Calu3 (cell line): ENCODE measurements at regions of chr7 and their contacts with region 1.

Region 1: DNA sequence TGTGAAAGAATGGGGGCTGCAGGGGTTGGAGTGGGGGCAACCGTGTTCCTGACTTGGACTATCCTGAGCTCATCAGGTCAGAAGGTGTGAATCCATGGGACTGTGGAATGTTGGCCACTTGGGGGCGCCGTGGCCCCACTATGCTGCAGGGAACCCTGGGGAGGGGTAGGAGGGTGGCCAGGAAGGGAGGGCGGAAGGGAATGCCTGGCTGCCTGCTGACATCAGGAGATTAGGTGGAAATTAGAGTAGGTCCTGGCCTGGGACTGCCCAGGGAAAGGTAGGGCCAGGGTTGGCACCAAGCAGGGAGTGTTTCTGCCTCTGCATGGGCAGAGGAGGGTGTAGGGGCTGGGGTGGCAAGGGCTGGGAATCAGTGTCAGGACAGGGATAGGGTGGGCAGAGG is 65.8 kb upstream of the PRSS58 start:
- DNase-seq: peak; percentile 67
- H3K4me3 Mint-ChIP-seq: no peak overlapping the region
- H3K27ac Mint-ChIP-seq: no peak overlapping the region
- H3K4me1 Mint-ChIP-seq: peaks cover 8% of the 10 kb centered on the region
- H3K27me3 Mint-ChIP-seq: peaks cover 39% of the 10 kb centered on the region
- CTCF ChIP-seq: peak; percentile 42

Region 2: DNA sequence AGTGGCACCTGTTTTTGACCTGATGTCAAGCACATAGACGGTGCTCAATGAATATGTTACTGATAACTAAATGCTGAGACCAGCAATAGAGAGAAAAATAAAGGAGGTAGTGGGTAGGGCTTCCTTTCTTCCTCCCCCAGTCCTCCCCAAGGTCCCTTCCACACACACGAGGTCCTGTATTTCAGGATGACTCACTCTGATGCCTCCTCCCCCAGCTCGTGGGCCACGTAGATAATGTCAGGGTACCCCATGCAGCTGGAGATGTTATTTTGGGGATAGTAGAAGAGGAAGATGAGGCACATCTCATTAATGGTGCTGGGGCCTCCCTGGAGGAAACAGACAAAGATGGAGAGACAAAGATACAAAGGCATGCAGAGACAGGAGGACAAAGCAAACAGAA is 83.2 kb before region 1 on chr7:
- CTCF ChIA-PET with region 1: no interaction called
- intact Hi-C with region 1: no loop called
- DNase-seq: no peak
- H3K4me3 Mint-ChIP-seq: no peak overlapping the region
- H3K27ac Mint-ChIP-seq: no peak overlapping the region
- H3K4me1 Mint-ChIP-seq: no peaks in the 10 kb centered on the region
- H3K27me3 Mint-ChIP-seq: no peaks in the 10 kb centered on the region
- CTCF ChIP-seq: no peak

Region 3: DNA sequence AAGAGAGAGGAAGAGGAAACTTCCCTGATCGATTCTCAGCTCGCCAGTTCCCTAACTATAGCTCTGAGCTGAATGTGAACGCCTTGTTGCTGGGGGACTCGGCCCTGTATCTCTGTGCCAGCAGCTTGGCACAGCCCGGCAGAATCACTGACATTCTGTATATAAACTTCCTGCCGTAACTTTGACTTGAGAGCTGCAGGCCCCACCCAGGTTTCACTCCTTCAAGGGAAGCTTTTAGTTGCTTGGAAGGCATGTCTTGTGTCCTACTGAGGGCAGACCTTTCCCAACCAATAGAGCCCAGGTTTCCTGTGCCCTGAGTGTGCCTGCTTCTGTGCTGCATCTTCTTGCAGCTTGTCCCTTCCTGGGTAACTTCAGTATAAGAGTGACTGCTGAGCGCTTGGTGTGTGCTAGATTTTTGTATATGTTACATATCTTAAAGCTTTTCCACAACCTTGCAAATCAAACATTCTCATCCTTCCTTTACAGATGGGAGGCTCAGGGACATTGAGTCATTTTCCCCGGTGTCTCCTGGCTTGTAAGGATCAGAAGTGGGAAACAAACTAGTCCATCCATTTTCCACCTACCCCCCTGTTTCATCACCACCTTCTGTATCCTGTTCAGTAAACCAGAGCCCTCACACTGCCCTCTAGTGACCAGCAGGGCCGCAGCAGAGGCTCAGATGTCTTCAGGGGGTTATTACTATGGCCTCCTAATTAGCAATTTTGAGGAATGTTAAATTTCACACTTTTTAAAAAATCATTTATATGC is 159.4 kb after region 1 on chr7:
- CTCF ChIA-PET with region 1: interaction called, 5 read pairs
- intact Hi-C with region 1: loop called (anchors 10 kb)
- DNase-seq: peak; percentile 72
- H3K4me3 Mint-ChIP-seq: no peak overlapping the region
- H3K27ac Mint-ChIP-seq: no peak overlapping the region
- H3K4me1 Mint-ChIP-seq: peaks cover 6% of the 10 kb centered on the region
- H3K27me3 Mint-ChIP-seq: peaks cover 56% of the 10 kb centered on the region
- CTCF ChIP-seq: peak; percentile 55

Region 4: DNA sequence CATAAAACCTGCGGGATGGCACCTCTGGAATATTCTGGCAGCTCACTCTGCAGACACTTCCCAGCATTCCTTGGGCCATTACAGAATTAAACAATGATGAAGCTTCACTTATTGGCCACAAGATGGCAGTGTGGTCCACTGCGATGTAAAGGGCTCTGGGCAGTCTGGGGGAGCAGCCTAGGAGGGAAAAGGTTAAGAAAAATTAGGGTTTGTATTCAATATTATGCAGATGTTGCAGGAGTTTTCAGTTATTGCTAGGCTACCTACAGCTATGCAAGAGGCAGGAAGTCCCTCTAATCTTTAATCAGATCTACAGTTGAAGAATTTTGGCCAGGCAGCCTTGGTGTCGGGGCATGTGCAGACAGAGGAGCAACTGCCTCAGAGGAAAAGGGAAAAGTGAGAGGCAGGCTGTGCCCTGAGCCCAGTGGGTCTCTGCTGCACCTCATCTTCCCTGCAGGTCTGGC is 192.4 kb after region 1 on chr7:
- CTCF ChIA-PET with region 1: interaction called, 11 read pairs
- intact Hi-C with region 1: no loop called
- DNase-seq: peak; percentile 44
- H3K4me3 Mint-ChIP-seq: no peak overlapping the region
- H3K27ac Mint-ChIP-seq: no peak overlapping the region
- H3K4me1 Mint-ChIP-seq: peaks cover 10% of the 10 kb centered on the region
- H3K27me3 Mint-ChIP-seq: peaks cover 29% of the 10 kb centered on the region
- CTCF ChIP-seq: peak; percentile 54